Ascending aorta (tissue), 2 donors: ENCODE measurements at regions of chr2 and their contacts with region 1.

Region 1: GRCh38 chr2:178414266-178415247 is 36.4 kb downstream of the PRKRA start:
- DNase-seq: peak; percentile 69 to 95
- H3K4me3 ChIP-seq: peak overlapping the region; percentile 79
- H3K27ac ChIP-seq: peak overlapping the region; percentile 96 to 97
- H3K4me1 ChIP-seq: no peaks in the 10 kb centered on the region
- H3K27me3 ChIP-seq: no peaks in the 10 kb centered on the region
- CTCF ChIP-seq: peak; percentile 74 to 94 (median 91)

Region 2: DNA sequence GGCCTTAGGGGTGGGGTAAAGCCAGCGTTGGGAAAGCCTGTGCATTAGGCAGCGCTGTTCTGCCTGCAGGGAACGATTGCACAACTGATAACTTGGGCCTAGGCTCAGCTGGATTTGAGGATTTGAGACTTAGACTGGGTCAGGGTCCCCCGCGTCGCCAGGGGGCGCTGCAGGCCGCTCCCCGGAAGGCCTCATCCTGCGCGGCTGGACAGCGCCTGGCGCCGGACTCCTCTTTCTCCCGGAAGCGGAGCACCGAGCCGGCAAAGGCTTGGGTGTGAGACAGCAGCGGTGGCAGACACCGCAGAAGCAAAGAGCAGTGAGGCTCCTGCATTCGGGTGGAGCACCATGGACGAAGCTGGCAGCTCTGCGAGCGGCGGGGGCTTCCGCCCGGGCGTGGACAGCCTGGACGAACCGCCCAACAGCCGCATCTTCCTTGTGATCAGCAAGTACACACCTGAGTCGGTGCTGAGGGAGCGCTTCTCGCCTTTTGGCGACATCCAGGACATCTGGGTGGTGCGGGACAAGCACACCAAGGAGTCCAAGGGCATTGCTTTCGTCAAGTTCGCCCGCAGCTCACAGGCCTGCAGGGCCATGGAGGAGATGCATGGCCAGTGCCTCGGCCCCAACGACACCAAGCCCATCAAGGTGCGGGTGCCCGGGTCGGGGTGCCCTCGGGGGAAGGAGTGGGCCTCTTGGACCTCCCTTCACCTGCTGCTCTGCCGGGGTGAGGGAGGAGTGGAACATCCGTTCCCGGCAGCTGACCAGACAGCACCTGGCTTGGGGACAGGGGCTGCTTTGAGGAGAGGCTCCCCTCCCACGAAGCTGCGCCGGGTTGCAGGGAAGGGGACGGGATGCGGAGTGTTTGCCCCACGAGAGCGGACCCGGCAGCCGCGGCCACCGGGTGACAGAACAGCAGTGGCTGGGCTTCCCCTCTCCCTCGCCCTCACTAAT is 302.1 kb before region 1 on chr2 and contains the start of gene RBM45:
- intact Hi-C with region 1: loop called (anchors 5 kb)
- DNase-seq: peak; percentile 54 to 96
- H3K4me3 ChIP-seq: peak within 1 kb of the TSS; percentile 84 to 94
- H3K27ac ChIP-seq: peak within 1 kb of the TSS; percentile 66 to 77
- H3K4me1 ChIP-seq: peaks cover 0 to 6% of the 10 kb centered on the region in 2 donors
- H3K27me3 ChIP-seq: no peaks in the 10 kb centered on the region
- CTCF ChIP-seq: peak; percentile 88 to 97 (median 94)
- total RNA-seq, gene RBM45: 2.8 TPM

Region 3: GRCh38 chr2:178128836-178129630 is 285.5 kb before region 1 on chr2:
- intact Hi-C with region 1: loop called (anchors 5 kb)
- DNase-seq: no peak
- H3K4me3 ChIP-seq: no peak overlapping the region
- H3K27ac ChIP-seq: no peak overlapping the region
- H3K4me1 ChIP-seq: no peaks in the 10 kb centered on the region
- H3K27me3 ChIP-seq: no peaks in the 10 kb centered on the region
- CTCF ChIP-seq: no peak

Region 4: DNA sequence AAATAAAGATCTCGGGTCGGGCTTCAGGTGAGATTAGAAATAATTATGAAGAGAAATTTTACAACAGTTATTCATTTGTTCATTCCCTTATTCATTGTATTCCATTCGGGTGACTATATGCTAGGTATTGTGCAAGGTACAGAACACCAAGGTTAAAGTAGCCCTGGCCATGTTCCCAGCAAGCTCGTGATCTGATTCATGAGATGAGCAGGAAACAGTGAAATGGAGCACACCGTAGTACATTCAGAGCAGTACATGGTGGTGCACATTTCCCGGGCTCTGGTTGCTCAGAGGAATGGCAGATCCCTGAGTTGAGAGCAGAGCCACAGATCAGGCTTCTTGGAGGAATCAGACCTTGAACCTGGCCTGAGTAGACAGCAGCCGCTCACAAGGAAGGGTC is 51.3 kb before region 1 on chr2:
- intact Hi-C with region 1: no loop called
- DNase-seq: no peak
- H3K4me3 ChIP-seq: no peak overlapping the region
- H3K27ac ChIP-seq: no peak overlapping the region
- H3K4me1 ChIP-seq: no peaks in the 10 kb centered on the region
- H3K27me3 ChIP-seq: no peaks in the 10 kb centered on the region
- CTCF ChIP-seq: no peak

Region 5: GRCh38 chr2:178397002-178397605 is 17.5 kb before region 1 on chr2:
- intact Hi-C with region 1: loop called (anchors 1 kb)
- DNase-seq: no peak
- H3K4me3 ChIP-seq: no peak overlapping the region
- H3K27ac ChIP-seq: no peak overlapping the region
- H3K4me1 ChIP-seq: no peaks in the 10 kb centered on the region
- H3K27me3 ChIP-seq: no peaks in the 10 kb centered on the region
- CTCF ChIP-seq: peak; percentile 12 to 53 (median 45)

Region 6: GRCh38 chr2:178450774-178451525 is 36.4 kb after region 1 on chr2 and contains the starts of genes PJVK and PRKRA:
- intact Hi-C with region 1: loop called (anchors 1 kb)
- DNase-seq: peak; percentile 91 to 98
- H3K4me3 ChIP-seq: peak within 1 kb of the TSS; percentile 93 to 96
- H3K27ac ChIP-seq: peak within 1 kb of the TSS; percentile 98 to 99
- H3K4me1 ChIP-seq: peaks cover 7 to 20% of the 10 kb centered on the region in 2 donors
- H3K27me3 ChIP-seq: no peaks in the 10 kb centered on the region
- CTCF ChIP-seq: no peak
- total RNA-seq, gene PJVK: not detected
- total RNA-seq, gene PRKRA: 75.5 TPM